MCF 10A (cell line): ENCODE measurements at regions of chr2 and their contacts with region 1.

Region 1: GRCh38 chr2:40716879-40717278 is 265.0 kb upstream of the SLC8A1 start:
- DNase-seq: peak; percentile 88
- H3K4me3 Mint-ChIP-seq: no peak overlapping the region
- H3K27ac Mint-ChIP-seq: peak overlapping the region; percentile 52
- H3K4me1 Mint-ChIP-seq: peaks cover 18% of the 10 kb centered on the region
- H3K27me3 Mint-ChIP-seq: no peaks in the 10 kb centered on the region
- CTCF ChIP-seq: no peak

Region 2: GRCh38 chr2:40658941-40659340 is 57.9 kb before region 1 on chr2:
- CTCF ChIA-PET with region 1: no interaction called
- POLR2A ChIA-PET with region 1: interaction called, 3 read pairs
- intact Hi-C with region 1: loop called (anchors 10 kb)
- DNase-seq: peak; percentile 40
- H3K4me3 Mint-ChIP-seq: no peak overlapping the region
- H3K27ac Mint-ChIP-seq: no peak overlapping the region
- H3K4me1 Mint-ChIP-seq: peaks cover 1% of the 10 kb centered on the region
- H3K27me3 Mint-ChIP-seq: no peaks in the 10 kb centered on the region
- CTCF ChIP-seq: no peak

Region 3: GRCh38 chr2:41000374-41000773 is 283.5 kb after region 1 on chr2:
- CTCF ChIA-PET with region 1: no interaction called
- POLR2A ChIA-PET with region 1: no interaction called
- intact Hi-C with region 1: no loop called
- DNase-seq: no peak
- H3K4me3 Mint-ChIP-seq: no peak overlapping the region
- H3K27ac Mint-ChIP-seq: no peak overlapping the region
- H3K4me1 Mint-ChIP-seq: no peaks in the 10 kb centered on the region
- H3K27me3 Mint-ChIP-seq: peaks cover 65% of the 10 kb centered on the region
- CTCF ChIP-seq: no peak